Activated CD4-positive, alpha-beta T cell treated with anti-CD3 and anti-CD28 coated beads, Interleukin-2, amount 10 ng/mL, durations not matched to agents 24 days and 14 days (primary cell): ENCODE measurements at regions of chr3 and their contacts with region 1.

Region 1: DNA sequence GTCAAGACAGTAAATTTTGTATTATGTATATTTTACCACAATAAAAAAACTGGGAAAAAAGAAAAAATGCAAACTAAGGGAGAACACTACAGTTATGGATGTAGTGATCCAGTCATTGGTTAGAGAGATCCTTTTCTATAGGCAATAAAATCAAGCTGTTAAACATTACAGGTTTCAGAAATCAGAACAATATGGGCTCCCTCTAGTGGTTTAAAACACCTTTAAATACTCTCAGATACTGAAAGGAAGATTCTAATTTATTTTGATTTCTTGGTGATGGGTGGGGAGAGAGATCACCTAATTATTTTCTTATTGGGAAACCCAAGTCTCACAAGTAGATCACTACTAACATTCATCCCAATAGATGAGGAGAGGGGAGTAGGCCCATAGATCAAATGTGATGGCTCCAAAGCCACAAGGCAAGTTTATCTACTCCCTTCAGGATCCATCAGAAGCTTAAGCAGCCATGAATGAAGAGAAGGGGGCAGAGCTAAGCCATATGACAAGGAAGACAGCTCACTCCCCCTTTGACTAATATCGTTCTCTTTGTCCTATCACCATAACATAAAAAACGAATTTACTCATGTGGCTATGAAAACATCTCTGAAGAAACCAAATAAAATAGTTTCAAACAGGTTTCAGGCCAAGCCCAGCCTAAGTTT is 118.6 kb downstream of the ANO10 start:
- DNase-seq: no peak
- H3K4me3 Mint-ChIP-seq: no peak overlapping the region
- H3K27ac Mint-ChIP-seq: no peak overlapping the region
- H3K4me1 Mint-ChIP-seq: peaks cover 20% of the 10 kb centered on the region
- H3K27me3 Mint-ChIP-seq: peaks cover 12% of the 10 kb centered on the region

Region 2: GRCh38 chr3:43162230-43163084 is 340.7 kb before region 1 on chr3:
- intact Hi-C with region 1: loop called (anchors 1 kb)
- DNase-seq: peak; percentile 89
- H3K4me3 Mint-ChIP-seq: peak overlapping the region; percentile 79
- H3K27ac Mint-ChIP-seq: peak overlapping the region; percentile 91
- H3K4me1 Mint-ChIP-seq: peaks cover 18% of the 10 kb centered on the region
- H3K27me3 Mint-ChIP-seq: peaks cover 2% of the 10 kb centered on the region

Region 3: GRCh38 chr3:43223670-43224364 is 279.4 kb before region 1 on chr3:
- intact Hi-C with region 1: loop called (anchors 5 kb)
- DNase-seq: no peak
- H3K4me3 Mint-ChIP-seq: no peak overlapping the region
- H3K27ac Mint-ChIP-seq: no peak overlapping the region
- H3K4me1 Mint-ChIP-seq: peaks cover 29% of the 10 kb centered on the region
- H3K27me3 Mint-ChIP-seq: peaks cover 2% of the 10 kb centered on the region

Region 4: GRCh38 chr3:43378066-43378935 is 124.9 kb before region 1 on chr3:
- intact Hi-C with region 1: loop called (anchors 5 kb)
- DNase-seq: peak; percentile 91
- H3K4me3 Mint-ChIP-seq: no peak overlapping the region
- H3K27ac Mint-ChIP-seq: no peak overlapping the region
- H3K4me1 Mint-ChIP-seq: peaks cover 8% of the 10 kb centered on the region
- H3K27me3 Mint-ChIP-seq: peaks cover 2% of the 10 kb centered on the region

Region 5: GRCh38 chr3:43389388-43390254 is 113.6 kb before region 1 on chr3:
- intact Hi-C with region 1: loop called (anchors 2 kb)
- DNase-seq: peak; percentile 93
- H3K4me3 Mint-ChIP-seq: peak overlapping the region; percentile 69
- H3K27ac Mint-ChIP-seq: peak overlapping the region; percentile 88
- H3K4me1 Mint-ChIP-seq: peaks cover 47% of the 10 kb centered on the region
- H3K27me3 Mint-ChIP-seq: peaks cover under 1% of the 10 kb centered on the region